ENCODE measurements at regions of chr6 and their contacts with region 1.

Region 1: GRCh38 chr6:51959744-51960383 is 127.5 kb downstream of the PKHD1 start:
- DNase-seq: peak; percentile 40
- CTCF ChIP-seq: peak; percentile 84

Region 2: DNA sequence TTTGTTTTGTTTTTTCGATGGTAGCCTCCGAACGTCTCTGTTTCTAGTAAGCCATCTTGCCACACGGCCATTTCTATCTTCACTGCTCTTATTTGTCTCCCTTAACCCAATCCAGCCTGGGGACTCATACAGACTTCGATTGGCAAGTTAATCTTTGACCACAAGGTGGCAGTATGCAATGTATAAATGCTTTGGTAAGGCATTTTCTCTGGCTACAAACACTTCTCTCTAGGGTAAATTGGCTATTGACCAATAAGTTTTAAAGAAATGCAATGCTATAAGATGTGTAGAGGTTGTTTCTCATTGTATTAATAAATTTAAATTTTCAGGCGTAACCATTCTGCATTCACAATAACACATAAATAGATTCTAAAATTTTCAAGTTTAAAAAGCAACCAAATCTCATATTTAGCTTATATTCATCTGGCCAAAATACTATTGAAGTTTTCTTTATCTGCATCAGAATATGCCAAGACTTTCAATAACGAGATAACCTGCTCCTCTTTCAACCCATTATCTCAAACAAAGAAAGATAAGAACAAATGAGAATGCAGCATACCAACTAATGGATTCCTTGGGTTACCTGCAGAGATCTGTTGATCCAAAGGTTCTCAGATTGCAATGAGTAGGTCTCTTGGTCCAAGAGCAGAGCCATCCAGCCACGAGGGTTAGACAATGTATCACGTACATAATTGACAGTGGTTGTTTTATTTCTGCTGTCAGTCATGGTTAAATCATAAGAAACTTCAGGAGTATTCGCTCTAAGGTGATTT is 104.4 kb before region 1 on chr6:
- in situ Hi-C with region 1: loop called (anchors 10 kb)
- DNase-seq: peak; percentile 70
- CTCF ChIP-seq: peak; percentile 57

Region 3: DNA sequence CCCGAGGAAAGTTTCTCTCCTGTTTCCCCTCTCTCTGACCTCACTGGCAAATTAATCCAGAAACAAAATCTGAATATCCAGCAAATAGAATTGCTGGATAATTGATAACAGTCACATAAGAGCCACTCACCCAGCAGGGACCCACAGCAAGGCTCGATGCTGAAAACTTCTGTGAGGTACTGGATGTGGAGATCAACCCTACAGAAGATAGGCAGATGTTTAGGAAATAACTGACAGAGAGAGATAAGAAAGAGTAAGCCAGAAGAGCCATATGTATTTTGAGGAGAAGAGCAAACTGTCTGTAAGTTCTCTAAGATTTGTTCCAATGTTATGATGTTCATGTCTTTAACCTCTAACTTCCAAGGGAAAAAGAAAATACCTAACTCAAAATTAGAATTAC is 67.8 kb after region 1 on chr6:
- in situ Hi-C with region 1: no loop called
- DNase-seq: no peak
- CTCF ChIP-seq: no peak

Region 4: GRCh38 chr6:53220605-53221004 is 1260.7 kb after region 1 on chr6:
- in situ Hi-C with region 1: no loop called
- DNase-seq: no peak
- CTCF ChIP-seq: no peak

Measured in GM13976 (cell line).